Head of caudate nucleus (tissue), 42 donors: ENCODE measurements at regions of chr16 and their contacts with region 1.

Region 1: GRCh38 chr16:89708441-89708931 is 7.0 kb upstream of the SPATA2L start:
- DNase-seq: no peak

Region 2: DNA sequence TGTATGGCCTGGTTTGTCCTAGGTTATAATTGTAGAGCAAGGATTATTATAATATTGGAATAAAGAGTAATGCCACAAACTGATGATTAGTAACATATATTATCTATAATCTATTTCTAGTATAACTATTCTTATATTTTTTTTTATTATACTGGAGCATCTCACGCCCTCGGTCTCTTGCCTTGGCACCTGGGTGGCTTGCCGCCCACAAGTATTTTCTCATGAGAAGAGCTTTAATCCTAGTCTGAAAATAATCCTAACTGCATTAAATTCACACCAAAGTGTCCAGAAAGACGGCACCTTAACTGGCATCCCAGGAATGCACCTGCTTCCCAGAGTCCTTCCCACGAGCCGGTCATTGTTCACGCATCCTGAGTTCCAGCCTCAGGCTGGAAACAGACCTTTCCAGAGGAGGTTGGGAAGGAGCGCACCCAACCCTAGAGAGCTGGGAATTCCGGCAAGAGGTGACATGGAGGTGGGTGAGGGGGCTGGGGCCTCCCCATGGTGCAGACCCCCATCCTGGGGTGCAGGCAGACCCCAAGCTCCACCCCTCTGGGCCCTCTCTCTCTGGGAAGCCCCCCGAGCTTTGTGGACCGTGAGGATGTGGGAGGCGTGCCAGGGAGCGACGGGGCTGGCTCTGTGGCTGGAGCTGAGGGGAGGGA is 66.9 kb before region 1 on chr16:
- intact Hi-C with region 1: no loop called
- DNase-seq: peak in 6 of 42 donors; percentile 20 to 51 (median 31)

Region 3: GRCh38 chr16:89657442-89658220 is 50.9 kb before region 1 on chr16 and contains the starts of genes CHMP1A and SPATA33:
- intact Hi-C with region 1: no loop called
- DNase-seq: peak; percentile 65 to 97 (median 92)

Region 4: DNA sequence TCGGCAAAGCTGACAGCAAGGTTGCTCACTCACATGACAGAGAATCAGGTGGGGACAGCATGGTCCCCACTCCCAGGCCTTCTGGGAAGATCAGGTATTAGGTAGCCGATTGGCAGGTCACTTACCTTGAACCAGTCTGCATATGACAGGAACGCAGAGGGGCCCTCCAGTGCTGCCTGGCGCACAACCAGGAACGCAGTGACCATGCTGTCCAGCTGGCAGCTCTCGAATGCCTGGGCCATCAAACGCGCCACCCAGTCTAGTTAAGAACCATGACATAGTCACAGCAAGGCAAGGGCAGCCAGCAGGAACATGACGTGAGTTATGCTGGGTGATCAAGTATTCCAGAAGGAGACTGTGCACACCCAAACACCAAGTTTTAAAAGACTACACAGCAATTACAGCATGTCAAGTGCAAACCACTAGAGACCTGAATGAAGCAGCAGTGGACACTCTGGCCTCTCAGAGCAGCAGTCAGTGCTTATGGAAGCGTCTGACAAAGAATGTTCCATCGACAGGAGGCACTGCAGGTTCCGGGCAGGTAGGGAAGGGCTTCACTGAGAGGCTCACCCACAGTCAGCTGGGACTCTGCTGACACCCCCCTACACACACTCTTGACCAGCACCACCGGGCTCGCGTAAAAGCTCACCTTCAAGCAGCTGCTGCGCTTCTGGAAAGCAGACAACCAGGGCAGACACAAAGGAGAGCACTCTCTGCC is 83.0 kb after region 1 on chr16:
- intact Hi-C with region 1: loop called (anchors 5 kb)
- DNase-seq: no peak